ENCODE measurements at regions of chr22 and their contacts with region 1.

Region 1: DNA sequence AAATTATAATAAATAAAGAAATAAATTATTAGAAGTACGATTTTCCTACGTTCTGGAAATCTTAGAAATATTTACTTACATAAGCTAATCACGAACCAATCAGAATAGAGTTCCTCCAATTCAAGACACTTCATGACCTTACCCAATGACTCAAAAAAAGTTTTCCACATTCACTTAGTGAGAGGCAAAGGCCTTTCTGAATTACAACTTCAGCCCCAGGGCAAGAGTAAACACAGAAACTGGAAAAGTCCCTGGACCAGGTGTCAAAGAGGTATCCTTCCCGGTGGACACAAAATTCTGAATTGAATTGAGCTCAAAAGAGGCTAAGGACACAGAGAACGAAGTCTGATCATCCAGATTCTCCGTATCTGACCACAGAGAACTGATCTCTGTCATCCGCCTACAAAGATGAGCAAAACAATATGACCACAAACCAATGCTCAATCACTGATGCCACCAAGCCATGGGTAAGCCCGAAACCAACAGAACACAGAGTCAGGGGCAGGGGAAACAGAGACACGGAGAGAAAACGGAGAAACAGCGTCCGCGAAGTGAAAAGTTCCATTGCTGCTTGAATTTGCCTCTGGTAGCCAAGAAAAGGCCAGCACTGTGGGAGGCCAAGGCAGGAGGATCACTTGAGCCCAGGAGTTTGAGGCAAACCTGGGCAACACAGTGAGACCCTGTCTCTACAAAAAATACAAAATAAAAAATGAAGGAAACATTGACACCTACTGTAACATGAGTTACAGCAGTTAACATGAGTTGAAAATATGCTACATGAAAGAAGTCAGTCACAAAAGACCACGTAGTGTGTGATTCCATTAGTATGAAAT is 6.8 kb downstream of the BID start:
- DNase-seq: no peak
- H3K4me3 ChIP-seq: no peak overlapping the region
- H3K4me3 Mint-ChIP-seq: no peak overlapping the region
- H3K27ac Mint-ChIP-seq: no peak overlapping the region
- H3K4me1 ChIP-seq: no peaks in the 10 kb centered on the region
- H3K4me1 Mint-ChIP-seq: peaks cover 7% of the 10 kb centered on the region
- H3K27me3 ChIP-seq: no peaks in the 10 kb centered on the region
- H3K27me3 Mint-ChIP-seq: no peaks in the 10 kb centered on the region
- CTCF ChIP-seq: no peak

Region 2: DNA sequence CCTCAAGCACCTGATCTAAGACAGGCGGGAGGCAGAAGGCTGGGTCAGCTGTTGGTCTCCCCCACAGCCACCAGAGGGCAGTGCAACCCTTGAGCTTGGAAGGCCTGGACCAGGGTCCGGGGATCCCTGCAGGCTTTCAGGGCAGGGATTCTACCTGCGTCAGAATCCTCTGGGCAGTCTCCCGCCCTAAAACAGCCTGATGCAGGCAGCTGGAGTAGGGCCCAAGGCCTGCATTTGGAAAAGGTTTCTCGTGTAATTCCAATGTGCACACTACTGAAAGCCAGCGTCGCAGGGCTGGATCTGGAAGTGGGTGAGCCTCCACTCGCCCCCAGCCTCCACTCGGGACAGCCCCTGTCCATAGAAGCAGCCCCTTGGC is 24.9 kb before region 1 on chr22:
- CTCF ChIA-PET with region 1: interaction called, 4 read pairs
- POLR2A ChIA-PET with region 1: no interaction called
- intact Hi-C with region 1: loop called (anchors 1 kb)
- DNase-seq: peak; percentile 80 to 85
- H3K4me3 ChIP-seq: no peak overlapping the region
- H3K4me3 Mint-ChIP-seq: no peak overlapping the region
- H3K27ac Mint-ChIP-seq: no peak overlapping the region
- H3K4me1 ChIP-seq: no peaks in the 10 kb centered on the region
- H3K4me1 Mint-ChIP-seq: no peaks in the 10 kb centered on the region
- H3K27me3 ChIP-seq: no peaks in the 10 kb centered on the region
- H3K27me3 Mint-ChIP-seq: no peaks in the 10 kb centered on the region
- CTCF ChIP-seq: peak; percentile 82 to 94

Region 3: GRCh38 chr22:17792299-17792698 is 24.9 kb after region 1 on chr22:
- CTCF ChIA-PET with region 1: no interaction called
- POLR2A ChIA-PET with region 1: no interaction called
- intact Hi-C with region 1: no loop called
- DNase-seq: no peak
- H3K4me3 ChIP-seq: no peak overlapping the region
- H3K4me3 Mint-ChIP-seq: no peak overlapping the region
- H3K27ac Mint-ChIP-seq: no peak overlapping the region
- H3K4me1 ChIP-seq: peaks cover 9% of the 10 kb centered on the region; the same call in 1 of the 2 replicates
- H3K4me1 Mint-ChIP-seq: peaks cover 18% of the 10 kb centered on the region
- H3K27me3 ChIP-seq: no peaks in the 10 kb centered on the region
- H3K27me3 Mint-ChIP-seq: no peaks in the 10 kb centered on the region
- CTCF ChIP-seq: peak in 1 of 2 experiments; percentile 4

Region 4: GRCh38 chr22:17820879-17821439 is 53.5 kb after region 1 on chr22:
- CTCF ChIA-PET with region 1: no interaction called
- POLR2A ChIA-PET with region 1: no interaction called
- intact Hi-C with region 1: no loop called
- DNase-seq: no peak
- H3K4me3 ChIP-seq: no peak overlapping the region
- H3K4me3 Mint-ChIP-seq: no peak overlapping the region
- H3K27ac Mint-ChIP-seq: no peak overlapping the region
- H3K4me1 ChIP-seq: no peaks in the 10 kb centered on the region
- H3K4me1 Mint-ChIP-seq: no peaks in the 10 kb centered on the region
- H3K27me3 ChIP-seq: no peaks in the 10 kb centered on the region
- H3K27me3 Mint-ChIP-seq: no peaks in the 10 kb centered on the region
- CTCF ChIP-seq: no peak